Posterior vena cava (tissue), 2 donors: ENCODE measurements at regions of chr20 and their contacts with region 1.

Region 1: DNA sequence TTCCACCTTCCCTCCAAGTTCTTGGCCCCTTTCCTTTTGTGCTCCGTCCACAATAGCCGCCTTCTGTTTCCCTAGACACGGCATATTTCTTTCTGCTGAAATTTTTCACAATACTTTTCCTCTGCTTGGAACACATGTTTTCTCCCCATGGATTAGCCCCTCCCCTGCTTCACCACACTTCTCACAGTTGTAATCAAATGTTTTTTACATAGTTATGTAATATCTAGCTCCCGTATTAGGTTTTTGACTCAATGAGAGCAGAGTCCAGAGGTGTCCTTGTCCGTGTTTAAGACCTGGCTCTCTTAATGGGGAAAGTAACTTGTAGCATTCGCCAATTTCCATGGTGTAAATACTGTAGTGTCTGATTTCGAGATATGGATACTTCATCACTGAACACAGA is 34.7 kb downstream of the PLCB1 start:
- DNase-seq: no peak

Region 2: GRCh38 chr20:8208998-8209440 is 42.3 kb after region 1 on chr20:
- intact Hi-C with region 1: loop called in 1 of 2 experiments (anchors 1 kb)
- DNase-seq: no peak

Region 3: DNA sequence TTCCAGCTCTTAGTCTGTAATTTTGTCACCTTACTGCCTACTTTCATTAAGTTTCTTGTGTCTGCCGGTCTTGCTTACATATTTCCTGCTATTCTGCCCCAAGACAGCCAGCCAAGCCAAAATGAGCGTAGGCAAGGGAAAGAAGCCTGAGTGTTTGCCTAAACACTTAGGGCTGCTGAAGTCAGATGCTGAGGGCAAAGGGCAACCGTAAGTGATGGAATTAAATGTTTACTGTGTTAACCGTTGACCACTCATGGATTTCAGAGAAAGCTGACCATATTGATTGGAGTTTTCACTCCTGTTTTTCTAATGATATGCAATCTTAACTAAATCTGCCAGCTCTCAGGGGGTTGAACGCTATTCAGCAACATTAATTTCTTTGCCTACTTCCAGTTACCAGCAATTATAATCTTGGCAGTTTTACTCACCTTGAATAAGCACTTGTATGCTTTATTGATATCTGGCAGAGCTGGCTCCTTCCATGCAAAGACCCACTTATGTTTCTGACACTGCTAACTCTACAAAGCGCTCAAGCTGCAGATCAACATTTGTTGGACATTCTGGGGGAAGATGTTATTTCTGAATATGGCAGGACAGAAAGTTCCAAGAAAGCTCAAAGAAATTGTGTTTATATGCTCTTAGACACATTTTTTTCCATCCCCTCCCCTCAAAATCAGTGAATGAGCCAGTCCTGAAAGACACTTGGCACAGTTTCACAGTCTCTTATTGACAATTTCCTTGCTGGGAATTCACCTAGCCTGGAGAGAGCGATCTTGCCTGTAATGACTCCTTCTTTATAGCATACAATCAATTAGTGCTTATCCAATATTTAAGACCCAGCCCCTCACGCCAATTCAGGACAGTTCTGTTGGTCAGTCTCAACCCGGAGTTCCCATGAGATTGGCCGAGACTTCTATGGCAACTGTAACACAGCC is 149.2 kb after region 1 on chr20:
- intact Hi-C with region 1: no loop called
- DNase-seq: no peak